Panc1 (cell line): ENCODE measurements at regions of chr1 and their contacts with region 1.

Region 1: GRCh38 chr1:199843861-199844260 is 183.6 kb upstream of the NR5A2 start:
- DNase-seq: no peak
- ATAC-seq: no peak
- H3K4me3 ChIP-seq: no peak overlapping the region
- H3K27ac ChIP-seq: no peak overlapping the region
- H3K4me1 ChIP-seq: no peaks in the 10 kb centered on the region
- H3K27me3 ChIP-seq: no peaks in the 10 kb centered on the region
- CTCF ChIP-seq: no peak

Region 2: GRCh38 chr1:199383791-199384190 is 460.1 kb before region 1 on chr1:
- CTCF ChIA-PET with region 1: no interaction called
- POLR2A ChIA-PET with region 1: no interaction called
- in situ Hi-C with region 1: no loop called
- intact Hi-C with region 1: no loop called
- DNase-seq: no peak
- ATAC-seq: no peak
- H3K4me3 ChIP-seq: no peak overlapping the region
- H3K27ac ChIP-seq: no peak overlapping the region
- H3K4me1 ChIP-seq: no peaks in the 10 kb centered on the region
- H3K27me3 ChIP-seq: no peaks in the 10 kb centered on the region
- CTCF ChIP-seq: no peak

Region 3: DNA sequence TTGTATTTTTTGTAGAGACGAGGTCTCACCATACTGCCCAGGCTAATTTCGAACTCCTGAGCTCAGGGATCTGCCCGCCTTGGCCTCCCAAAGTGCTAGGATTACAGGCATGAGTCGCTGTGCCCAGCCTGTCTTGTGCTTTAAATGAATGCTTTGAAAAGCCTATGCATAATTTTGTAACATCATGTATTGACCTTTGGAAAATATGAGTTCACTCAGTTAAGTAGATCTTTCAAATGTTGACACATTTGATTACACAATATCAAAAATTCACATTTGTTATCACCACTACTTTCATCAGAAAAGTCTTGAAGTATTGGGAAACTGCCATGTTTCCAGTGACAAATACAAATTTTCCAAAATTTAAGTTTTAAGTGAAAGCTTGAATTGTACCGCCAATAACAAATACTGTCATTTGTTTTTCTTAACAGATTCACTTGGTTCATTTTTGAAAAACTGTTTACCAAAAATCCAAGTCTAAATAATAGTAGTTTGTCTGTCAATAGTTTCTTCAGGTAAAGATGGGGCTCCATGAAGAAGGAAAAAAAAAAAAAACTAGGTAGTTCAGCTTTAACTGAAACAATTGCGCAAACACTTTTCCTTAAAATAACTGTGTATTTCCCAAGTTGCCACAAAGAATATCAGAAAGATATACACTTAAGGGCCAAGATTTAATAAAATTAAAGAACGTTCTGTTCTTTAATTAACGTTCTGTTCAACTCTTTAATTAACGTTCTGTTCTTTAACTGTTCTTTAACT is 49.6 kb before region 1 on chr1:
- CTCF ChIA-PET with region 1: no interaction called
- POLR2A ChIA-PET with region 1: interaction called, 10 read pairs
- in situ Hi-C with region 1: no loop called
- intact Hi-C with region 1: no loop called
- DNase-seq: no peak
- ATAC-seq: no peak
- H3K4me3 ChIP-seq: no peak overlapping the region
- H3K27ac ChIP-seq: no peak overlapping the region
- H3K4me1 ChIP-seq: no peaks in the 10 kb centered on the region
- H3K27me3 ChIP-seq: no peaks in the 10 kb centered on the region
- CTCF ChIP-seq: no peak

Region 4: GRCh38 chr1:199954699-199955098 is 110.8 kb after region 1 on chr1:
- CTCF ChIA-PET with region 1: no interaction called
- POLR2A ChIA-PET with region 1: interaction called, 10 read pairs
- in situ Hi-C with region 1: no loop called
- intact Hi-C with region 1: no loop called
- DNase-seq: no peak
- ATAC-seq: peak; percentile 76; the same call in 1 of the 2 replicates
- H3K4me3 ChIP-seq: no peak overlapping the region
- H3K27ac ChIP-seq: no peak overlapping the region
- H3K4me1 ChIP-seq: no peaks in the 10 kb centered on the region
- H3K27me3 ChIP-seq: no peaks in the 10 kb centered on the region
- CTCF ChIP-seq: peak; percentile 77

Region 5: DNA sequence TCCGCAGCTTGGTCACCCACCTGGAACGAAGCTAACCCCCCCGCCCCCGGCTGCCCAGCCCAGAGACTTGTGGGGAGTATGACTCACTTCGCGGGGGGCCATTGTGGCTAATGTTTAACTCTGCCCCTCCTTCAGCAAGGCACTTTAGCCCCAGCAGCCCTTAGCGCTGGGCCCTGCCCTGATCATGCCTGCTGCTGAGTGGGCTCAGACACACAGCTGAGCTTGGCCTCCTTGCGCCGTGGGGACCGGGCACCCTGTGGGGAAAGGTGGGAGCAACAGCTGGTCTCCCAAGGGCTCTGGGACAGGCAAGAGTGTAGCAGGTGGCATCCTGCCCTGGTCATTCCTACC is 1561.6 kb after region 1 on chr1:
- CTCF ChIA-PET with region 1: no interaction called
- POLR2A ChIA-PET with region 1: interaction called, 11 read pairs
- in situ Hi-C with region 1: no loop called
- intact Hi-C with region 1: no loop called
- DNase-seq: no peak
- ATAC-seq: no peak
- H3K4me3 ChIP-seq: no peak overlapping the region
- H3K27ac ChIP-seq: no peak overlapping the region
- H3K4me1 ChIP-seq: no peaks in the 10 kb centered on the region
- H3K27me3 ChIP-seq: no peaks in the 10 kb centered on the region
- CTCF ChIP-seq: no peak